ENCODE measurements at regions of chr20 and their contacts with region 1.

Region 1: GRCh38 chr20:3767427-3768341 is at the start of gene ADISSP:
- DNase-seq: peak; percentile 96 to 98 (median 98)
- H3K4me3 ChIP-seq: peak within 1 kb of the TSS; percentile 37 to 89 (median 68)
- H3K27ac ChIP-seq: peak within 1 kb of the TSS; percentile 72 to 90
- H3K4me1 ChIP-seq: peaks cover 2 to 63% (median 35%) of the 10 kb centered on the region in 4 experiments
- H3K27me3 ChIP-seq: no peaks in the 10 kb centered on the region

Region 2: GRCh38 chr20:3659492-3660261 is 108.0 kb before region 1 on chr20:
- CTCF ChIA-PET with region 1: no interaction called
- POLR2A ChIA-PET with region 1: no interaction called
- DNase-seq: no peak
- H3K4me3 ChIP-seq: no peak overlapping the region
- H3K27ac ChIP-seq: no peak overlapping the region
- H3K4me1 ChIP-seq: peaks cover 0 to 11% (median 8%) of the 10 kb centered on the region in 4 experiments
- H3K27me3 ChIP-seq: peaks cover 0 to 69% (median 16%) of the 10 kb centered on the region in 5 experiments

Region 3: DNA sequence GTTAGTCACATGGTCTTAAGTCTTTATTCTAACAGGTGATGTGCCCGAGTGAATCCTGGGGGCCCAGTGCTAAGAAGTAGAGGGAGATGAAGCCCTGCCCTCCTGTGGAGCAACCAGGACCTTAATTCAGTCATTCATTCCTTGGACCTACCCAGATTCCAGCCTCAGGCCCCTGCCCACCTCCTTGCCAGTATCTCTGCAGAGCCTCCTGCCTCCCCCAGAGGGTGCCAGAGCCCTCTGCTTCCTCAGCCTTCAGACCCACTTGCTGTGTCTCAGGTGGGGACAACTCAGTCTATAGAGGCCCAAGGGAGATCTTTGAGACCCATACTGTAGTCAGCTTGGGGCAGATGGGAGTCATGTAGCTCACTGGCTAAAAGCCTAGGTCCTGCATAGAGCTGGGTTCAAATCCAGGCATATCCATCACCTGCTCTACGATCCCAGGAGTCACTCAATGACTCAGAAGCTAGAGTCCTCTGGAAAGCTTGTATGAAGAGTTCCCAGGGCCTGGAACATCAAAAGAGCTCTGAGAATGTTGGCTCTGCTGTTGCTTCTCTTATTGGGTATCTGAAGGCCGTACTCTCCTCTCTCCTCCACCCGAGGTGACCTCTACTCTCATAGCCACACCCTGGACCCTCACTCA is 51.4 kb before region 1 on chr20:
- CTCF ChIA-PET with region 1: interaction called, 14 read pairs
- POLR2A ChIA-PET with region 1: no interaction called
- DNase-seq: peak; percentile 64 to 77 (median 75)
- H3K4me3 ChIP-seq: no peak overlapping the region
- H3K27ac ChIP-seq: no peak overlapping the region
- H3K4me1 ChIP-seq: peaks cover 0 to 12% (median 3%) of the 10 kb centered on the region in 4 experiments
- H3K27me3 ChIP-seq: peaks cover 0 to 7% (median 0%) of the 10 kb centered on the region in 5 experiments

Region 4: GRCh38 chr20:3753098-3753980 is 14.3 kb before region 1 on chr20:
- CTCF ChIA-PET with region 1: interaction called, 216 read pairs
- POLR2A ChIA-PET with region 1: no interaction called
- DNase-seq: peak; percentile 75 to 87 (median 81)
- H3K4me3 ChIP-seq: no peak overlapping the region
- H3K27ac ChIP-seq: no peak overlapping the region
- H3K4me1 ChIP-seq: peaks cover 0 to 21% (median 8%) of the 10 kb centered on the region in 4 experiments
- H3K27me3 ChIP-seq: peaks cover 0 to 2% (median 0%) of the 10 kb centered on the region in 5 experiments

Region 5: DNA sequence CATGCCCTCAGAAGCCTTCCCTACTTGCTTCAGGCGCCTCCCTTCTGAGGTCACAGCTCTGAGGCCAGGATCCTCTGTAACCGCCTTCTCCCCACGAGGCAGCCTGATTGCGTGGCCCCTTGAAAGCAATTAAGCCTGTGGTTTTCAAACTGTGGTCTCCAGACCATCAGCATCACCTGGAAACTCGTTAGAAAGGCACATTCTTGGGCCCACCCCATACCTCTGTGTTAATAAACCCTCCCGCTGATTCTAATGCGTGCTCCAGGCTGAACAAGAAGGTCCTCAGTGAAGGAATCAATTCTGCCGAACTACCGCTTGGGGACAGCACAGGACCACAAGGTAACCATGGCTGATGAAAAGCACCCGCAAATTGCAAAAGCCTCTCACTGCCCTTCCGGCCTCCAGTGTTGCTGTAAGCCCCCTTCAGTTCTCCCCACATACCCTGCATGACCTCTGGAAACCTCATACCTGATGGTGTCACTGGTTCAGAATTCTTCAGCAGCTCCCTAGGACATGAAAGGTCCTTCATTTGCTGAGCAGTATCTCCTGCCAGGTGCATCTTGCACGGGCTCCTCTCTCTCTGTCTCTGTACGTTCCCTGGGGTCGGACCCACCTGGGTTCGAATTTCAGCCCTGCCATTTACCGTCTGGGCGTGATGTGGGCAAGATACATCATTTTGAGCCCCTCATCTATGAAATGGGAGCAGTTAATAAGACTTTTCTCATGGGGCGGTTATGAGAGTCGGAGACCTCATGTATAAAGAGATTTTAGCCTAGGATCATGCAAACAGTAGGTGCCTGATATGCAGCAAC is 341.0 kb after region 1 on chr20:
- CTCF ChIA-PET with region 1: no interaction called
- POLR2A ChIA-PET with region 1: no interaction called
- DNase-seq: peak; percentile 85 to 93 (median 91)
- H3K4me3 ChIP-seq: no peak overlapping the region
- H3K27ac ChIP-seq: no peak overlapping the region
- H3K4me1 ChIP-seq: peaks cover under 1 to 28% (median 22%) of the 10 kb centered on the region in 4 experiments
- H3K27me3 ChIP-seq: no peaks in the 10 kb centered on the region